Activated CD4-positive, alpha-beta T cell treated with anti-CD3 and anti-CD28 coated beads for 36 hours (primary cell): ENCODE measurements at regions of chr15 and their contacts with region 1.

Region 1: DNA sequence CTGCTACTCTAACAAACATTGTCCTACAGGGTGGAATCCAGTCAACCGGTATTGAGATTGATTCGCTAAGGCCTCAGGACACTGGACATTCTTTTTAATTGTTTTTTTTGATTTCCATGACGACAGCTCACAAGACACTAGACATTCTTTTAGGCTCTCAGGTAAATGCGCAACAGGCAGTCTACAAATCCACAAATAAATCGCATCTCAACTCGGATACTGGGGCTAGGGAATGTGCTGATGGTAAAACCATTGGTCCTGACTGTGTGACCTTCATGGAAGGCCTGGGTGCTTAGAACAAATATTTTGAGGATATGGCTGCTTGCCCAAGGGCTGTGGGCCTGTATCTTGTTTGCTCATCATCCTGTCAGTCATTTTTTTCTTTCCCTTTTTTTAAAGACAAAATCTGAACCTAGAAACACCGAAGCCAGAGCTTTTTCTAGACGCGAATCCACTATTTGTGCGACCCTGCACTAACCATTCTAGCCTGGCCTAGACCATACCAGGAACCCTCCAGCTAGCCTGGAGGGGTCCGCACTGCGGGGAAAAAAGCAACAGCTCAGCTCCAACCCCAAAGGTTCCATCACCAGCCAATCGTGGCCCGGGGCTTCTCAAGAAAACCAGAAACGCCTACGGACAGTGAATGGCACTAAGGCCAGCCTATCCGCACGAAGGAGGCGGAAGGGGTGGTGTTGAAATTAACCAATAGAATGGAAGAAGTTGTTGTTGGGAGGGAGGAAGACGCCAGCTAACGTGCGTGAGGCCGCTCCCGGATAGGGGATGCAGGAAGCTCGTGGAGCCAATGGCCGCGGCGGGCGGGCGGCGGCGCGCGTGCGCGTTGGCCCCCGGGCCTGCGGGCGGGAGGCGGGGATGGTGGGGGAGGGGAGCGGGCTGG is 18.1 kb upstream of the CHD2 start:
- DNase-seq: peak; percentile 98
- ATAC-seq: peak; percentile 93
- H3K4me3 Mint-ChIP-seq: peak overlapping the region; percentile 84
- H3K27ac Mint-ChIP-seq: peak overlapping the region; percentile 96
- H3K4me1 Mint-ChIP-seq: peaks cover 48% of the 10 kb centered on the region
- H3K27me3 Mint-ChIP-seq: no peaks in the 10 kb centered on the region

Region 2: DNA sequence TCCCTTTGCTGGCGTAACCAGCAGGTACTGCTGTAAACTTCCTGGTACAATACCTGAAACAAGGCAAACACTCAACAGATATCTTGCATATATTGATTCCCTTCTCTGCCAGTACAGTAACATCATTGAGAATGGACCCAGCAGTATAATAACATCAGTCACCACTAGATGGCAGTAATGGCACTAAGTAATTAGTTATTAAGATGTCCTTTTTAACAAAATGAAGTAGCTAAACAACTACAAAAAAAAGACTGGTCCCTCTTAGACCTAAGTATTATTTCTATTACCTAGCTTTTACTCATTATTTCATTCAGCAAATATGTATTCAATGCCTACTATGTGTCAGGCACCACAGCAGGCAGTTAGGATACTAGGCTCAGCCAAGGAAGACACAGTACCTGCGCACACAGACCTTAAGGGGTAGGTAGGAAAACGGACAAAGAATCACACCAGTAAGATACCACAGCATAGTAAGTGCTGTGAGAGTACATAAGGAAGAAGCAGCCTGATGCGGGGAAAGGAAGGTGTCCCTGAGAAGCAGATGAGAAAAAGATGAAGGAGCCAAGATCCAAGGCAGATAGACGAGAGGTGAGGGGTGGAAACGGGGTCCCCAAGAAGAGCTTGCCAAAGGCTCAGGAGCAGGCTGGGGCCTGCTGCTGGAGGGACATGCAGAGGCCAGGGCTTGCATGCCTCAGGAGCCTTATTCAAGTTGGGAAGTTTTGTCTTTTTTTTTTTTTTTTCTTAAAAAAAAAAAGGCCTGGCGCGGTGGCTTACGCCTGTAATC is 84.7 kb before region 1 on chr15:
- CTCF ChIA-PET with region 1: interaction called, 10 read pairs
- POLR2A ChIA-PET with region 1: interaction called, 8 read pairs
- intact Hi-C with region 1: no loop called
- DNase-seq: no peak
- ATAC-seq: peak; percentile 90
- H3K4me3 Mint-ChIP-seq: no peak overlapping the region
- H3K27ac Mint-ChIP-seq: peak overlapping the region; percentile 65
- H3K4me1 Mint-ChIP-seq: peaks cover 8% of the 10 kb centered on the region
- H3K27me3 Mint-ChIP-seq: no peaks in the 10 kb centered on the region

Region 3: GRCh38 chr15:92808978-92809879 is 72.8 kb before region 1 on chr15:
- CTCF ChIA-PET with region 1: interaction called, 45 read pairs
- POLR2A ChIA-PET with region 1: interaction called, 86 read pairs
- intact Hi-C with region 1: loop called (anchors 1 kb)
- DNase-seq: peak; percentile 99
- ATAC-seq: peak; percentile 82
- H3K4me3 Mint-ChIP-seq: peak overlapping the region; percentile 88
- H3K27ac Mint-ChIP-seq: peak overlapping the region; percentile 99
- H3K4me1 Mint-ChIP-seq: peaks cover 43% of the 10 kb centered on the region
- H3K27me3 Mint-ChIP-seq: no peaks in the 10 kb centered on the region

Region 4: DNA sequence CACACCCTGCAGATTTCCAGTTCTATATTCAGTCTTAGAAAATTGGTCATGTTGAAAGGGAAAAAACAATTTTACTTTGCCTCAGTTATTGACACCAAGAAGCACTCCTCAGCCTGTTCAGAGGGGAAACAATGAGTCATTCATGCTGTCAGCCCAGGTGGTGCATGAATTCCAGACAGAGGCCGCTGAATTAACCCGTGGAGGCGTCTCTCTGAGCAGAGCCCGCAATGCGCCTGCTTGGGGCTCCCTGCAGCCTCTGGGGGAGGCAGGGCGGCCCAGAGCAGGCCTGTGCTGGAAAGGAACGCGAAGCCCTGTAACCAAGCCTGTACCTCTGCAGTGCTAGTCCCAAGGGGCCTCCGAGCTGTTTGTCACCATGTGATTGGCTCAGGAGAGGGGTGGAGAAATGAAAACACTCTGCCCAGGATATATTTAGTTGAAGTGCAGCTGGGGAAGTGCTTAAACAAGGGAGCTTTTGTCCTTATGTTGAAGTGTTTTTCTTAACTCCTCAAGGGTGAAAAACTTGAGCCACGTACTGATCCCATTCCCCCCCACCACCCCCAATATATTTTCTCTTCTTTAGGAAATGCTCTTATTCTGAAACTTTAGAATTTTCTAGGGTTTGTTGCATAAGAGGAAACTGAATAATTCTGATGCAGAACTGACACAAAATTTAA is 50.3 kb before region 1 on chr15:
- CTCF ChIA-PET with region 1: interaction called, 7 read pairs
- POLR2A ChIA-PET with region 1: interaction called, 52 read pairs
- intact Hi-C with region 1: loop called (anchors 1 kb)
- DNase-seq: peak; percentile 96
- ATAC-seq: peak; percentile 95
- H3K4me3 Mint-ChIP-seq: peak overlapping the region; percentile 65
- H3K27ac Mint-ChIP-seq: peak overlapping the region; percentile 96
- H3K4me1 Mint-ChIP-seq: peaks cover 58% of the 10 kb centered on the region
- H3K27me3 Mint-ChIP-seq: no peaks in the 10 kb centered on the region

Region 5: GRCh38 chr15:92864127-92864814 is 17.8 kb before region 1 on chr15:
- CTCF ChIA-PET with region 1: interaction called, 10 read pairs
- POLR2A ChIA-PET with region 1: no interaction called
- intact Hi-C with region 1: loop called in 1 of 2 experiments (anchors 2 kb)
- DNase-seq: no peak
- ATAC-seq: no peak
- H3K4me3 Mint-ChIP-seq: no peak overlapping the region
- H3K27ac Mint-ChIP-seq: no peak overlapping the region
- H3K4me1 Mint-ChIP-seq: peaks cover 5% of the 10 kb centered on the region
- H3K27me3 Mint-ChIP-seq: no peaks in the 10 kb centered on the region

Region 6: DNA sequence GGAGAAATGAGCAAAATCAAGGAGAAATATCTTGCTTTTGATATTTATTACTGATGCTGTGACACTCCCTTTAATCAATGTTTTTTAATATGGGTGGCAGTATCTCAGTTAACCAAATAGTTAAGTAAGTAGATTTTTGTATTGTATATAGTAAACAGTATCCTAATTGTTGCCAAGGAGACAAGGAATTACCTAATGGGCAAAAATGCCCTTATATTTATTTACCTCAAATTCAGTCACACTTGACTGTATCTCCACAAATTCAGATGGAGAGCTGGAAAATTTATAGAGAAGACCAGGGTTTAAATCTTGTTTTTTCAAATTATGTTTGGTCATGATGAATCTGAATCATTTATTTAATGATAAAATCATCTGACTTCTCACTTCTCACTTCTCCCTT is 14.5 kb after region 1 on chr15:
- CTCF ChIA-PET with region 1: interaction called, 61 read pairs
- POLR2A ChIA-PET with region 1: interaction called, 111 read pairs
- intact Hi-C with region 1: loop called in 1 of 2 experiments (anchors 1 kb)
- DNase-seq: no peak
- ATAC-seq: no peak
- H3K4me3 Mint-ChIP-seq: peak overlapping the region; percentile 38
- H3K27ac Mint-ChIP-seq: peak overlapping the region; percentile 75
- H3K4me1 Mint-ChIP-seq: peaks cover 68% of the 10 kb centered on the region
- H3K27me3 Mint-ChIP-seq: no peaks in the 10 kb centered on the region

Region 7: GRCh38 chr15:92917606-92918407 is 35.8 kb after region 1 on chr15:
- CTCF ChIA-PET with region 1: interaction called, 18 read pairs
- POLR2A ChIA-PET with region 1: interaction called, 26 read pairs
- intact Hi-C with region 1: loop called (anchors 1 to 5 kb)
- DNase-seq: peak; percentile 96
- ATAC-seq: peak; percentile 10
- H3K4me3 Mint-ChIP-seq: peak overlapping the region; percentile 20
- H3K27ac Mint-ChIP-seq: peak overlapping the region; percentile 84
- H3K4me1 Mint-ChIP-seq: peaks cover 86% of the 10 kb centered on the region
- H3K27me3 Mint-ChIP-seq: no peaks in the 10 kb centered on the region